Caco-2 (cell line): ENCODE measurements at regions of chr18 and their contacts with region 1.

Region 1: GRCh38 chr18:961644-962355 is 57.1 kb downstream of the ADCYAP1 start:
- DNase-seq: peak in 1 of 2 experiments; percentile 46
- H3K4me3 ChIP-seq: no peak overlapping the region
- H3K4me3 Mint-ChIP-seq: no peak overlapping the region
- H3K27ac Mint-ChIP-seq: no peak overlapping the region
- H3K4me1 ChIP-seq: no peaks in the 10 kb centered on the region
- H3K4me1 Mint-ChIP-seq: no peaks in the 10 kb centered on the region
- H3K27me3 ChIP-seq: no peaks in the 10 kb centered on the region; the same call in 1 of the 2 replicates
- H3K27me3 Mint-ChIP-seq: peaks cover 8% of the 10 kb centered on the region
- CTCF ChIP-seq: peak; percentile 88 to 89

Region 2: DNA sequence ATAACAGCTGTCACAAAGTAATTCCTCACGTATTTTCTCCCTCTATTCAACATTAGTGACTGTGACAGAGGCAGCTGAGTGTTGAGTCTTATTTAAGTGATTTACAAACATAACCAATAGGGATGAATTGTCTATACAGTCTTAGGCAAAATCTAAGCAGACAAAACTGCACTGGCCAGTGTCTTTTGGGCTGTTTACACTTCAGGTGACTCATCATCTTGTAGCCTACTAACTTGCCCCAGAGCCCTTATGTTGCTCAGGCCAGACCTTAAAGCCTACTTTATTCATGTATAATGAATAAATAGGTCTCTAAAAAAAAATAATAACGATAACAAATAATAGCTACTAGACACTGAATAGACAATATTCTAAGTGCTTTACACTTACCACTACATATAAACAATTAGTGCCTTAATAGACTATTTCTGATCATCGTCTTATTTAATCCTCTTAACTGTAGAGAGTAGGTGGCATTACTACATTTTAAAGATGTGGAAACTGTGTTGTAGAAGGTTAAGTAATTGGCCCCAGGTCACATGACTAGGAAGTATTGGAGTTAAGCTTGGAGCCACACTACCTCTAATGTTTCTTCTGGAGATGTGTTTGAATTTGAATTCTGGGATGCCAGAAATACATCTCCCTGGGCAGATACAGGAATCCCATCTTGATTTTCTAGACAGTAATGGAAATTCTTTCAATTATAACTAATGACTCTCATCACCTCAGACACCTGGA is 710.9 kb before region 1 on chr18:
- CTCF ChIA-PET with region 1: no interaction called
- POLR2A ChIA-PET with region 1: no interaction called
- intact Hi-C with region 1: no loop called
- DNase-seq: no peak
- H3K4me3 ChIP-seq: no peak overlapping the region
- H3K4me3 Mint-ChIP-seq: no peak overlapping the region
- H3K27ac Mint-ChIP-seq: no peak overlapping the region
- H3K4me1 ChIP-seq: no peaks in the 10 kb centered on the region
- H3K4me1 Mint-ChIP-seq: no peaks in the 10 kb centered on the region
- H3K27me3 ChIP-seq: no peaks in the 10 kb centered on the region
- H3K27me3 Mint-ChIP-seq: no peaks in the 10 kb centered on the region
- CTCF ChIP-seq: no peak

Region 3: GRCh38 chr18:902229-902628 is 59.6 kb before region 1 on chr18:
- CTCF ChIA-PET with region 1: interaction called, 6 read pairs
- POLR2A ChIA-PET with region 1: no interaction called
- intact Hi-C with region 1: loop called (anchors 1 kb)
- DNase-seq: peak in 1 of 2 experiments; percentile 24
- H3K4me3 ChIP-seq: no peak overlapping the region
- H3K4me3 Mint-ChIP-seq: no peak overlapping the region
- H3K27ac Mint-ChIP-seq: no peak overlapping the region
- H3K4me1 ChIP-seq: no peaks in the 10 kb centered on the region
- H3K4me1 Mint-ChIP-seq: no peaks in the 10 kb centered on the region
- H3K27me3 ChIP-seq: no peaks in the 10 kb centered on the region
- H3K27me3 Mint-ChIP-seq: peaks cover 13% of the 10 kb centered on the region
- CTCF ChIP-seq: peak in 1 of 2 experiments; percentile 35